Thyroid gland (tissue), 4 donors: ENCODE measurements at regions of chr16 and their contacts with region 1.

Region 1: GRCh38 chr16:12095275-12096156 is 119.0 kb downstream of the SNX29 start:
- DNase-seq: peak; percentile 76 to 85
- H3K4me3 ChIP-seq: no peak overlapping the region
- H3K27ac ChIP-seq: peak overlapping the region; percentile 33 to 65 (median 57)
- H3K4me1 ChIP-seq: peaks cover 24 to 45% of the 10 kb centered on the region in 2 donors
- H3K27me3 ChIP-seq: no peaks in the 10 kb centered on the region
- CTCF ChIP-seq: peak; percentile 71 to 90 (median 82)
- POLR2A ChIP-seq: no peak

Region 2: DNA sequence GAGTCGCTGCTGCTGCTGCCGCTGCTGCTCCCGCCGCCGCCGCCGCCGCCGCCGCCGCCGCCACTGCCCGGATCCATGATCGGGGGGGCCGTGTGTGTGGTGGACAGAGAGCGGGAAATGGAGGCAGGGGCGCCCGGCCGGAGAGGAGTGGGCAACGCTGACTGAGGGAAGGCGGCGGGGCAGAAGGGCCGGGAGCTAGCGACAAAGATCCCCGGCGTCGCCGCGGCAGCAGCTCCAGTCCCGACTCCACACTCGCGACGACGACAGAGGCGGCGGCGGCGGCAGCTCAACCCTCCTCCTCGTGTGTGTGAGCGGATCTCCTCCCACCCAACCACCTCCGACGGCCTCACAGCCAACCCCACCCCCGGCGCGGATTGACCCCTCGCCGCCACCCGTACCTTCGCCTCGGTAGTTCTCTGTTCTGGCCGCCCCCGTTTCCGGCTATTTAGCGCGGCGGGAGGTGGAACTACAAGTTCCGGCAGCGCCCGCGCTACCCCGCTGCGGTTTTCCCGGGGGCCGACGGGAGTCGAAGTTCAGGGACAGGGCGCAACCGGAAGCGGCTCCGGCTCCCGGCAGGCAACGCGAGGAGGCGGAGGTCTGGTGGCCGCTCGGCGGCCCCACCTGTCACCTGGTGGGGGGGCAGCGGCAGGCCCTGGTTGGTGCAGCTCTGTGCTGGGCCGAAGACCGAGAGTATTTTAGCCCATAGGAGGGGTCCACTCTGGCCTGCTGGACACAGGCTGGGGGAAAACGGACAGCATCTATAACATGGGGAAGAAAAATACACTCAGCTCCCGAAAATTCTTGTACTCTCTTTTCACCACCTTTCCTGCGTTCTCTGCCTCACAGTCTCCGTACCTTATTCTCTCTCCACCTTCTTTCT is 179.6 kb before region 1 on chr16 and contains the start of gene GSPT1:
- intact Hi-C with region 1: no loop called
- DNase-seq: peak; percentile 99 to 100
- H3K4me3 ChIP-seq: peak within 1 kb of the TSS; percentile 59 to 99 (median 77)
- H3K27ac ChIP-seq: peak within 1 kb of the TSS; percentile 85 to 92 (median 88)
- H3K4me1 ChIP-seq: peaks cover 25 to 26% of the 10 kb centered on the region in 2 donors
- H3K27me3 ChIP-seq: no peaks in the 10 kb centered on the region
- CTCF ChIP-seq: peak in 4 of 6 experiments; percentile 13 to 34 (median 17)
- POLR2A ChIP-seq: peak; percentile 82 to 94
- total RNA-seq, gene GSPT1: 71.9 to 106 (median 86.6) TPM

Region 3: DNA sequence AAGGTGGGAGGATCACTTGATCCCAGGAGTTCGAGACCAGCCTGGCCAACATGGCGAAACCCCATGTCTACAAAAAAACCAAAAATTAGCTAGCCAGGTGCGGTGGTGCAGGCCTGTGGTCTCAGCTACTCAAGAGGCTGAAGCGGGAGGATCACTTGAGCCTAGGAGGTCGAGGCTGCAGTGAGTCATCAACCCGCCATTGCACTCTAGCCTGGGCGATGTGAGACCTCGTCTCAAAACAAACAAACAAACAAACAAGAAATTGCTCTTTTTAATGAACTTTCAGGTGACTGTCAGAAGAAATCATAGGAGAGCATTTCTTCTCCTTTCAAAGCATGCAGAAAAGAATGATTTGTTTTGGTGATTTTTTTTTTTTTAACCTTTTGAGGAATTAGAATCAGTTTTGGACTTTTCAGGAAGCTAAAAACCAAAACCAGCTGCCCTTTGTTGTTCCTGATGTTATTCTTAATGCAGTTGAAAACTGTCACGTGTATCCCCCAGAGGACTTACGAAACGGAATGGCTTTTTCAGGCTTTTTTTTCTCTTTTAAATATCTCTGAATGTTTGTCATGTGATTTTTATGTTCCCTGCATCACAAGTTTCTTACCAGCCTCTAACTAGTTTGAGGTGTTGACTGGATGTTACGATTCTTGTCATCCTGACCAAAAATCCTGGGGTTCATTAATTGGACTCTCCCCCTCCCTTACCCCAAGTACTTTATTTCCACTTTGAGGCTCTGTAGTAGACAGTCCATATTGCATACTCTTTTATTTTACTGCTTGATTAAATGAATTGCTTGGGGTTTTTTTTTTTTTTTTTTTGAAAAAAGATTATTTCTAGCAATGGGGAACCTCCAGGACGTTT is 84.9 kb before region 1 on chr16:
- intact Hi-C with region 1: no loop called
- DNase-seq: no peak
- H3K4me3 ChIP-seq: no peak overlapping the region
- H3K27ac ChIP-seq: peak overlapping the region in 2 of 3 donors; percentile 24 to 45
- H3K4me1 ChIP-seq: peaks cover 0 to 6% of the 10 kb centered on the region in 2 donors
- H3K27me3 ChIP-seq: no peaks in the 10 kb centered on the region
- CTCF ChIP-seq: no peak
- POLR2A ChIP-seq: no peak

Region 4: GRCh38 chr16:12193031-12193430 is 97.5 kb after region 1 on chr16:
- intact Hi-C with region 1: loop called (anchors 10 kb)
- DNase-seq: no peak
- H3K4me3 ChIP-seq: no peak overlapping the region
- H3K27ac ChIP-seq: no peak overlapping the region
- H3K4me1 ChIP-seq: peaks cover 7 to 10% of the 10 kb centered on the region in 2 donors
- H3K27me3 ChIP-seq: no peaks in the 10 kb centered on the region
- CTCF ChIP-seq: no peak
- POLR2A ChIP-seq: no peak

Region 5: GRCh38 chr16:12311309-12311708 is 215.8 kb after region 1 on chr16:
- intact Hi-C with region 1: no loop called
- DNase-seq: no peak
- H3K4me3 ChIP-seq: no peak overlapping the region
- H3K27ac ChIP-seq: no peak overlapping the region
- H3K4me1 ChIP-seq: peaks cover 0 to 2% of the 10 kb centered on the region in 2 donors
- H3K27me3 ChIP-seq: no peaks in the 10 kb centered on the region
- CTCF ChIP-seq: no peak
- POLR2A ChIP-seq: no peak